Breast epithelium (tissue), 4 donors: ENCODE measurements at regions of chr2 and their contacts with region 1.

Region 1: GRCh38 chr2:149816756-149817551 is 229.4 kb upstream of the MMADHC start:
- DNase-seq: no peak
- H3K4me3 ChIP-seq: no peak overlapping the region
- H3K27ac ChIP-seq: no peak overlapping the region
- H3K4me1 ChIP-seq: peaks cover 0 to 6% of the 10 kb centered on the region in 2 donors
- H3K27me3 ChIP-seq: no peaks in the 10 kb centered on the region
- CTCF ChIP-seq: no peak
- POLR2A ChIP-seq: no peak

Region 2: DNA sequence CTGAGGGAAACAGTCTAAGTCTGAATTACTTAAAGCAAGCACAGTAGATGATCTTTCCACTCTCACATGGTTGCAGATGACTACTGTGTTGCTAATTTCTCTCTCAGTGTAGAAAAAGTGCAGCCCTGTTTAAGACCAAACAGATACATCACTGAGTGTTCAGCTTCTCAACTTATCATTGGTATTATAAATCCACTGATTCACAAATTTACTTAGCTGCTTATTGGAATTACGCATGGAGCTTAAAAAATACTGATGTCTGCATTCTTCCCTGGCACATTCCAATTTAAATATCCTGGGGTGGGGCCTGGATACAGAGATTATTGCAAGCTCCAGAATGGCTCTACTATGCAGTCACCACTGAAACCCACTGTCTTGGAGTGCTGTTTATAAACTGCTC is 259.3 kb after region 1 on chr2:
- intact Hi-C with region 1: loop called (anchors 10 kb)
- DNase-seq: no peak
- H3K4me3 ChIP-seq: no peak overlapping the region
- H3K27ac ChIP-seq: no peak overlapping the region
- H3K4me1 ChIP-seq: no peaks in the 10 kb centered on the region
- H3K27me3 ChIP-seq: no peaks in the 10 kb centered on the region
- CTCF ChIP-seq: no peak
- POLR2A ChIP-seq: no peak